Posterior cingulate gyrus (tissue), 11 donors: ENCODE measurements at regions of chr7 and their contacts with region 1.

Region 1: GRCh38 chr7:134954197-134955082 is 31.9 kb upstream of the AGBL3 start:
- DNase-seq: no peak

Region 2: GRCh38 chr7:134514663-134515062 is 439.8 kb before region 1 on chr7:
- intact Hi-C with region 1: no loop called
- DNase-seq: no peak

Region 3: DNA sequence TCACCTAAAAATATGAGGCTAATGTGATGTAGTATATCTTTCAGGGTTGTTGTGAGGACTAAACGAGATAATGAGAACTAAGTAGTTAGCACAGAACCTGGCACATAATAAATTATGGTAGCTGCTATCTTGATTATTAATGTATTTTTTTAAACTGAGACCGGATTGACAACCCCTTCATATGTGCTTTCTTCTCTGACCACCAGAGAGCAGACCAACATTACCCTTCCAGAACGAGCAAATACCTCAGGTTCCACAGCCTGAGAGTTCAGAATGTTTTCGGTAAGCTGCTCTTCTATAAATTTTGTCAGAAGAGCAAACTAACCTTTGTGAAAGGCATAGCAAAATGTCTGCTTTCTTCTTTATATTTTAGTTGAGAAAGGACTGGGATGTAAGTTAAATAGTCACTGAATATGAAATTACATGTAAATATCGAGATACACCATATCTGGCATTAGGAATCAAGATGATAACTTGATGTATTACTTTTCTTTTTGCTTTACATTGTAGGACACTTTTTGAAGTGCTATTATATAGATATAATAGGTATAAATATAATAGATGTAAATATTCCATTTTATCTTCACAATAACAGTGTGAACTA is 321.4 kb before region 1 on chr7:
- intact Hi-C with region 1: loop called (anchors 5 kb)
- DNase-seq: peak in 1 of 10 donors; percentile 12